ENCODE measurements at regions of chr2 and their contacts with region 1.

Region 1: GRCh38 chr2:229780856-229781773 is 66.8 kb upstream of the DNER start:
- DNase-seq: peak; percentile 49
- H3K4me3 ChIP-seq: peak overlapping the region in 1 of 2 experiments; percentile 4; a peak in 1 of 4 replicates
- H3K27ac ChIP-seq: peak overlapping the region; percentile 0 to 11; a peak in 1 of 4 replicates
- H3K4me1 ChIP-seq: peaks cover 2 to 7% of the 10 kb centered on the region in 2 experiments; a peak in 3 of 4 replicates
- H3K27me3 ChIP-seq: no peaks in the 10 kb centered on the region
- CTCF ChIP-seq: peak; percentile 94
- EP300 ChIP-seq: no peak
- RAD21 ChIP-seq: peak; percentile 66

Region 2: GRCh38 chr2:229586746-229587705 is 194.1 kb before region 1 on chr2:
- CTCF ChIA-PET with region 1: no interaction called
- POLR2A ChIA-PET with region 1: no interaction called
- DNase-seq: peak; percentile 81
- H3K4me3 ChIP-seq: peak overlapping the region in 1 of 2 experiments; percentile 51; a peak in 2 of 4 replicates
- H3K27ac ChIP-seq: no peak overlapping the region
- H3K4me1 ChIP-seq: peaks cover 0 to 8% of the 10 kb centered on the region in 2 experiments; a peak in 1 of 4 replicates
- H3K27me3 ChIP-seq: no peaks in the 10 kb centered on the region
- CTCF ChIP-seq: peak; percentile 93
- EP300 ChIP-seq: no peak
- RAD21 ChIP-seq: peak; percentile 93

Region 3: DNA sequence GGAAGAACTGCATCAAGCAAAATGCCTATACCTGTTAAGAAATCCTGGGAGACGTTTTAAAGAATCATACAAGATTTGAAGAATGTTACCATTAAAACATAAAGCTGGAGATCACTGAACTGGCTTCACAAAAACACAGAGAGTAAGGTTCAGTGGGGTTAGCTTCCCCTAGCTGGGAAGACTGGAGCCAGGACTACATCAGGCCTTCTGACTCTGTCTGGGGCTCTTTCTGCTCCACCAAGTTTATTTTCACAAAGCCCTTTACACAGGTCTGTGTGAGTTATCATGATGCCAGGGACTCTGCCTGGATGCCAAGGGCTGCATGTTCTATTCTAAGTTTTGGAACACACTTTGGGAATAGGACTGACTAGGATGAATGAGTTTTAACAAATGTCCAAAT is 19.5 kb before region 1 on chr2:
- CTCF ChIA-PET with region 1: interaction called, 39 read pairs
- POLR2A ChIA-PET with region 1: no interaction called
- DNase-seq: no peak
- H3K4me3 ChIP-seq: no peak overlapping the region
- H3K27ac ChIP-seq: no peak overlapping the region
- H3K4me1 ChIP-seq: no peaks in the 10 kb centered on the region
- H3K27me3 ChIP-seq: no peaks in the 10 kb centered on the region
- CTCF ChIP-seq: no peak
- EP300 ChIP-seq: no peak
- RAD21 ChIP-seq: no peak

Region 4: DNA sequence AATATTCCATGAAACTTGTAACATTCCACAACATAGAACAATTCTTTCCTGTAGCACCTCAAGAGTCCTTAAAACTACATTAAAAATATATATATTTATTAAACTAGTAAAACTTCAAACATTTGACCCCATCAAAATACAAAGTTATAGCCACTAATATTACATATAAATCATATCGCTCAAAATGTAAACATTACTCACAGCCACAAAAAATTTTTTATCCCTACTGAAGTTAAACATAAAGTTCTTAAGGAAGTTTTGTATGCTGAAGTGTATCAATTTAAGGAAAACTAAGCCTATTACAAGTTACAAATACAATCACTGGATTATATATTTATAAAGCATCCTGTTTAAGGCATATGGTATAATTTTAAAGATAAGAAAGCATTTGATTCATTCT is 13.5 kb after region 1 on chr2:
- CTCF ChIA-PET with region 1: interaction called, 23 read pairs
- POLR2A ChIA-PET with region 1: no interaction called
- DNase-seq: no peak
- H3K4me3 ChIP-seq: no peak overlapping the region
- H3K27ac ChIP-seq: no peak overlapping the region
- H3K4me1 ChIP-seq: no peaks in the 10 kb centered on the region
- H3K27me3 ChIP-seq: no peaks in the 10 kb centered on the region
- CTCF ChIP-seq: no peak
- EP300 ChIP-seq: no peak
- RAD21 ChIP-seq: no peak

Region 5: DNA sequence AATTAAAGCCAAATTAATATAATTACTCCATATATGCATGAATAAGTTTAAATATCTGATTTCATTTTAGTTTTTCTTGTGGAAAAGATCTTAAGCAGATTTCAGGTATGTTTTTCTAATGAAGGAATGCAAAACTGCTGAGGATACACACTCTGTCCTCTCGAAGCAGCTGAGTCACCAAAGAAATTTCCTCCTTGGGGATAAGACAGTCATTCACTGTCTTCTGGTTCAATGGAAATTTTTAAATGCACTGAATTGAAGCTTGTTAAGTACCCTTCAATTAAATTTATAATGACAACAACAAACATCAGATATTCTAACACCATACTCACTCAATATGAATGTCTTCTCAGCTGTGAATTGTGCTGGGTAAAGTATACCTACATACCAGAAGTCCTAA is 34.7 kb after region 1 on chr2:
- CTCF ChIA-PET with region 1: interaction called, 16 read pairs
- POLR2A ChIA-PET with region 1: no interaction called
- DNase-seq: no peak
- H3K4me3 ChIP-seq: no peak overlapping the region
- H3K27ac ChIP-seq: peak overlapping the region; percentile 20 to 78; a peak in 3 of 4 replicates
- H3K4me1 ChIP-seq: peaks cover 10 to 15% of the 10 kb centered on the region in 2 experiments; a peak in 3 of 4 replicates
- H3K27me3 ChIP-seq: no peaks in the 10 kb centered on the region
- CTCF ChIP-seq: no peak
- EP300 ChIP-seq: no peak
- RAD21 ChIP-seq: no peak

Measured in SK-N-SH (cell line).